Heart right ventricle (tissue), 16 donors: ENCODE measurements at regions of chr5 and their contacts with region 1.

Region 1: GRCh38 chr5:38157024-38157423 is 101.3 kb upstream of the EGFLAM start:
- DNase-seq: no peak
- ATAC-seq: no peak
- H3K4me3 ChIP-seq: no peak overlapping the region
- H3K27ac ChIP-seq: no peak overlapping the region
- H3K4me1 ChIP-seq: no peaks in the 10 kb centered on the region
- H3K27me3 ChIP-seq: peaks cover 0 to 5% (median 2%) of the 10 kb centered on the region in 7 donors
- CTCF ChIP-seq: no peak

Region 2: DNA sequence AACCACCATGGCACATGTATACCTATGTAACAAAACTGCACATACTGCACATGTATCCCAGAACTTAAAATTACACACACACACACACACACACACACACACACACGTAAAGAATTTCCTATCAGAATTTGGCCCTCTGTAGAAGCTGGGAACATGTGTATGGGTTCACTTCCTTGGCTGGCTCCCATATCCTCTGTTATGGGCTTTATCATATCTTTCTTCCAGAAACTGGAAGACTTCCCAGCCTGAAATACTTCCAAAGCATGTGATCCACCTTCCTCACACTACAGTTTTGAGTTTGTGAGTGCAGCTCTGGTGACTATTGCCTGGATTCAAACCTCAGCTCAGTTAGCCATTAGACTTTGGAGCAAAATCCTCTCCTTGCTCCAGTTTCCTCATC is 238.6 kb before region 1 on chr5:
- intact Hi-C with region 1: no loop called
- DNase-seq: peak in 1 of 2 donors; percentile 78
- ATAC-seq: peak; percentile 86 to 99 (median 95)
- H3K4me3 ChIP-seq: no peak overlapping the region
- H3K27ac ChIP-seq: no peak overlapping the region
- H3K4me1 ChIP-seq: peaks cover 0 to 13% (median 0%) of the 10 kb centered on the region in 9 donors
- H3K27me3 ChIP-seq: no peaks in the 10 kb centered on the region
- CTCF ChIP-seq: no peak

Region 3: DNA sequence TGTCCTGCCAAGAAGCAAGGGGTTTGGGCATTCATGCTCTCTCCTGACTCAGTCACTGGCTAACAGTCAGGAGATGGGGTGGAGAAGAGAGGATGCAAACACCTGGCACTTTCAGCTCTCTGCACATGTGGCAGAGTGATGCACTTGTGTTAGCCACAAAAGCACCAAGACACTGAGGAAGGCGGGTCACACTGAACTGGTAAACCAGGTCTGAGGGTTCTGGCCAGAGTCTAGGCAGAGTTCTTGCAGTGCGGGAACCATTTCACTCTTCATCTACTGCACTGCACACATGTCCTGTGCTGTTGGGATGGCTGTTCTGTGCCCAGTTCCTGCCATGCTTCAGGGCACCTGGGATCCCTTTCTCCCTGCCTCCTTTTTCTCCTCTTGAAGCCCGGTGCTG is 160.1 kb before region 1 on chr5:
- intact Hi-C with region 1: no loop called
- DNase-seq: no peak
- ATAC-seq: no peak
- H3K4me3 ChIP-seq: no peak overlapping the region
- H3K27ac ChIP-seq: no peak overlapping the region
- H3K4me1 ChIP-seq: peaks cover 0 to 1% (median 0%) of the 10 kb centered on the region in 9 donors
- H3K27me3 ChIP-seq: no peaks in the 10 kb centered on the region
- CTCF ChIP-seq: no peak

Region 4: DNA sequence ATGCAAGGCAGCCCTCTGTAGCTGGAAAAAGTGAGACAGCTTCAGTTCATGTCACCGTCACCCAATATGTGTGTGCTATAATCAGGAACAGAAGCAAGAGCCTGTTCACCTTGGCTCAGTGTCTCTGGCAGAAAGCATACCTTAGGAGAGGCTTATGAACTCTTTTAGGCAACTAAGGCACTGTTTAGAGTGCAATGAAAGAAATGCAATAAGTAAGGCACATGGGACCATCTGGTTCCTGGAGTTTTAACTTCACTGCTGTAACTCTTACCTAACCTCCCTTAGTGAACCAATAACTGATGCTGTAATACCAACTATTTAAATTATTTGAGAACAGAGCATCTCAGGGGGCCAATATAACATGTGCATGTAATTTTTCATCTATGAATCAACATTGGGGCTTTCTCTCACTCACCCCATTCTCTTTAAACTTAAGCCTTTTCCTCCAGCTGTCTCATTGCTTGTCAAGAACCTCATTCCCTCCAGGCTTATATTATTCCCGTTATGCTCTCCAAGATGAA is 1174.9 kb after region 1 on chr5:
- intact Hi-C with region 1: loop called in 1 of 10 experiments (anchors 10 kb)
- DNase-seq: no peak
- ATAC-seq: no peak
- H3K4me3 ChIP-seq: no peak overlapping the region
- H3K27ac ChIP-seq: no peak overlapping the region
- H3K4me1 ChIP-seq: no peaks in the 10 kb centered on the region
- H3K27me3 ChIP-seq: no peaks in the 10 kb centered on the region
- CTCF ChIP-seq: no peak